IMR-90 (cell line): ENCODE measurements at regions of chr5 and their contacts with region 1.

Region 1: GRCh38 chr5:39376293-39376714 is 12.0 kb upstream of the C9 start:
- DNase-seq: peak; percentile 48
- ATAC-seq: peak; percentile 49
- H3K4me3 ChIP-seq: no peak overlapping the region
- H3K27ac ChIP-seq: no peak overlapping the region
- H3K4me1 ChIP-seq: peaks cover 6% of the 10 kb centered on the region; the same call in 1 of the 2 replicates
- H3K27me3 ChIP-seq: no peaks in the 10 kb centered on the region
- CTCF ChIP-seq: peak; percentile 72
- POLR2A ChIP-seq: 0 out of 2 replicates have a peak, but pooled peaks have one; percentile 2
- RAD21 ChIP-seq: peak; percentile 74

Region 2: DNA sequence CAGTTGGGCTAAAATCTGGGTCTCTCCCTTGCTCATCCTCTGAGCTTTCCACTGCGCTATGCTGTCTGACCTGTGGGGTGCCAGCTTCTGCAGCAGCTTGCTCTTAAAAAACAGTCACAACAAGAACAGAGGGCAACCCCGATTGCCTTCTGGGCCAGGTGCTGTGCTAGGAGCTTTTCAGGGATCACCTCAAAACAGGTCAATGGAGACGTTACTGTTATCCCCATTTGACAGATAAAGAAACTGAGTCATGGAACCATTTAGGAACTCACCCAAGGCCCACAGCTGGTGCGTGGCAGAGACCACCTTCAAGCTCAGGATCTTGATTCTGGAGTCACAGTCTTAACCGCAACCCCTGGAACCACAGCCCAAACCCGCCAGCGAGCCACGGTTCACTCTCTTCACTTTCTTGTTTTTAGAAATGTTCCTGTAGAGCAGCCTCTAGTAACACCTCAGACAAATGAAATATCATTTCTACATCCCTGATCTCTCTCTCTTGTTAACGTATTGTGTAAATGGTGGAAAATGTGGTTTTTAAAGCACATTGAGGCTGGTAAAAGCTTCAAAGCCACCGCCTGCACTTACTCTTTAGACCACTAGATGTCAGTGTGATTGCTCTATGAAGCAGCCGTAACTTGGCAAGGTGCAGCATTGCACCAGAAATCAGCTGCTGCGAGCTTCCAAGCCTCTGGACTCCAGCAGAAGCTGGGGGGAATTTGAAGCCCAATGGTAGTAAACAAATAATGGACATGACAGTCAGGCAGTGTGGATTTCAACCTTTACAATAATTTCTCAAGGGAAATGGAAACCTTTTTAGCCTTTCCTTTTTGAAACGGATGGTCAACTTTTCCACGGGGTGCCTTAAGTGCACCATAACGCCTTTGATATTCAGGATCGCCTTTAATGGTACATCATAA is 158.7 kb before region 1 on chr5:
- CTCF ChIA-PET with region 1: interaction called, 7 read pairs
- POLR2A ChIA-PET with region 1: no interaction called
- dilution Hi-C with region 1: no loop called
- in situ Hi-C with region 1: no loop called
- intact Hi-C with region 1: loop called (anchors 10 kb)
- DNase-seq: peak; percentile 80
- ATAC-seq: peak; percentile 94
- H3K4me3 ChIP-seq: no peak overlapping the region
- H3K27ac ChIP-seq: no peak overlapping the region
- H3K4me1 ChIP-seq: no peaks in the 10 kb centered on the region
- H3K27me3 ChIP-seq: no peaks in the 10 kb centered on the region; the same call in none of the 2 replicates
- CTCF ChIP-seq: peak; percentile 89
- POLR2A ChIP-seq: no peak
- RAD21 ChIP-seq: peak; percentile 76

Region 3: GRCh38 chr5:39554159-39554558 is 177.9 kb after region 1 on chr5:
- CTCF ChIA-PET with region 1: no interaction called
- POLR2A ChIA-PET with region 1: no interaction called
- dilution Hi-C with region 1: no loop called
- in situ Hi-C with region 1: loop called (anchors 5 kb)
- intact Hi-C with region 1: no loop called
- DNase-seq: no peak
- ATAC-seq: no peak
- H3K4me3 ChIP-seq: no peak overlapping the region
- H3K27ac ChIP-seq: no peak overlapping the region
- H3K4me1 ChIP-seq: no peaks in the 10 kb centered on the region
- H3K27me3 ChIP-seq: peaks cover 14% of the 10 kb centered on the region
- CTCF ChIP-seq: no peak
- POLR2A ChIP-seq: no peak
- RAD21 ChIP-seq: no peak

Region 4: DNA sequence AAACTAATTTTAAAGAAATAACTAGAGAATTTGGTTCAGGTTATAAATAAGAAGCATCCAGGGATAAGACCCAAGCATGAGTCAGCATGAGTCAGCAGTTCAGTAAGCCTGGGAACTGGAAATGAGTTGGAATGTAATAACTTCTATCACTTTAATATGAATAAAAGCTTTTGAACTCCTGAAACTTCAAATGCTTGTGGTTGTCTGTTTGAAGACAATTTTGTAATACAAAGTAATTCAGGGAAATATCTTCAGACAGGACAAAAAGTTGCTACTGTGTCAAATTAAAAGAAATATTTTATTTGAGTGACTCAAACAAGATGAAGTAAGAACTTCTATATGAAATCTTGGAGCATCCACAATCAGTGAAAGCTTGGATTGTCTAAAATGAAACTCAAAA is 379.7 kb after region 1 on chr5:
- CTCF ChIA-PET with region 1: no interaction called
- POLR2A ChIA-PET with region 1: no interaction called
- dilution Hi-C with region 1: no loop called
- in situ Hi-C with region 1: loop called (anchors 25 kb)
- intact Hi-C with region 1: no loop called
- DNase-seq: peak; percentile 96
- ATAC-seq: peak; percentile 61
- H3K4me3 ChIP-seq: no peak overlapping the region
- H3K27ac ChIP-seq: peak overlapping the region; percentile 40; the same call in 1 of the 2 replicates
- H3K4me1 ChIP-seq: peaks cover 2% of the 10 kb centered on the region; the same call in 1 of the 2 replicates
- H3K27me3 ChIP-seq: no peaks in the 10 kb centered on the region
- CTCF ChIP-seq: no peak
- POLR2A ChIP-seq: no peak
- RAD21 ChIP-seq: no peak